HepG2 (cell line): ENCODE measurements at regions of chr17 and their contacts with region 1.

Region 1: DNA sequence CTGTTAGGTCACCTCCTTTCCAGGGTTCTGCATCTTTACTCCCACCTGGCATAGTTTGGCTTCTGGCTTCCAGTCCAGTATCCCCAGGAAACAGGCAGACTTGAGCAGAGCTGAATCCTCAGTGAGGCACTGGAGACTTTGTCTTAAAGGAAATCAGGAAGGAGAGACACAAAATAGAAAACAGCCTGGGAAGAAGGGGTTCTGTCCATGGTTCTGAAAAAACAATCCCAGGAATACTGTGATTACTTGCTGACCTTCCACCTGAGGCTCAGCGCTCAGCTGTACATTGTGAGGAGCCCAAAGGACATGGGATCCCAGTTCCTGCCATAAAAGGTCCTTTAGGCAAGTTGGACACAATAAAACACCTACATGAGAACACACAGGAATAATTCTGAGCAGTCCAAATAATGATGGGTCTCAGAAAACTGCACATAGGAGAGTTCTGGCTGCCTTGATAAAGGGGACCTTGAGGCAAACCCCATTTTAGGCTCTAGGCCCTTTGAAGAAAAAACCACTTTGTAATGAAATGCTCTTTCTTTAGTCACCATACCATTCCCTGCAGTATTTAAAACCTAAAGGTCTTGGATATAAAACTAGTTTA is 81.4 kb upstream of the CRHR1 start:
- DNase-seq: no peak
- ATAC-seq: no peak
- H3K4me3 ChIP-seq: no peak overlapping the region
- H3K27ac ChIP-seq: no peak overlapping the region
- H3K4me1 ChIP-seq: no peaks in the 10 kb centered on the region
- H3K27me3 ChIP-seq: peaks cover 7 to 28% of the 10 kb centered on the region in 2 experiments; a peak in 3 of 5 replicates
- CTCF ChIP-seq: no peak
- EP300 ChIP-seq: no peak
- POLR2A ChIP-seq: no peak
- RAD21 ChIP-seq: no peak

Region 2: GRCh38 chr17:45722161-45722560 is 19.4 kb after region 1 on chr17:
- CTCF ChIA-PET with region 1: no interaction called
- POLR2A ChIA-PET with region 1: no interaction called
- in situ Hi-C with region 1: no loop called
- intact Hi-C with region 1: loop called (anchors 1 kb)
- DNase-seq: peak; percentile 58
- ATAC-seq: peak; percentile 99
- H3K4me3 ChIP-seq: no peak overlapping the region
- H3K27ac ChIP-seq: no peak overlapping the region
- H3K4me1 ChIP-seq: no peaks in the 10 kb centered on the region
- H3K27me3 ChIP-seq: peaks cover 2 to 50% of the 10 kb centered on the region in 2 experiments; a peak in 4 of 5 replicates
- CTCF ChIP-seq: peak; percentile 80
- EP300 ChIP-seq: no peak
- POLR2A ChIP-seq: no peak
- RAD21 ChIP-seq: peak; percentile 84